PC-9 (cell line): ENCODE measurements at regions of chr2 and their contacts with region 1.

Region 1: DNA sequence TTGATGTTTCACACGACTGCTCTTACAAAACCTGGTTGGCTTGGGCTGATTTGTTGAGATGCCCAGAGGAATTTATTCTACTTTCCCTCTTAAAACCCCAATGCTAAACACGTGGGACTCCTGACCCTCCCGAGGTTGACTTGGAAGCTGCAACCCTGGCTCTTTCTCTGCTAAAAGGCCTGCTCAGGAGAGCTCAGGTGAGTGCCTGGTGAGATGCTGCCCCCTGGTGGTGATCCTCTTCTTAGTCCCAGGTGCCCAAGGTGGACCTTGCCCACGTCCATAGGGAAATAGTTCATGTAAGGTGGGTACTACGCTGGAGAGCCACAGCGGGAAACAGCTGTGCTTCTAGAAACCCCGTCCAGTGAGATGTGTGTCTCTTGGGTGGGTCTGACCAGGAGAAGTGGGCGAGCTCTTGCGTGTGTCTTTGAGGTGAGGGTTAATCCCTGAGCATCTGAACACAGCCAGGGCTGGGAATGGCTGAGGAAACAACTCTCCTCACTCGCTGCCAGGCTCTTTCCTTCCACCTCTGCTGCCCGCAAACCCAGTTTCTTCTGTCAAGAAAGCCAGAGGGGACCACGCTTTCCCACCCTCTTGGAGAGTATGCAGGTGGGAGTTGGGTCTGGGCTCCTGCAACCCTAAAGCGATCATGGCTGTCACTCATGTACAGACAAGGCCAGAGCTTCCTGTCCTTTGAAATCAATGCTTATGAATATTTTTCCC is 25.5 kb upstream of the PXDN start:
- DNase-seq: peak; percentile 52 to 70
- H3K4me3 ChIP-seq: no peak overlapping the region
- H3K27ac ChIP-seq: no peak overlapping the region
- H3K4me1 ChIP-seq: no peaks in the 10 kb centered on the region
- H3K27me3 ChIP-seq: peaks cover 25% of the 10 kb centered on the region; the same call in 1 of the 2 replicates
- CTCF ChIP-seq: peak; percentile 92

Region 2: DNA sequence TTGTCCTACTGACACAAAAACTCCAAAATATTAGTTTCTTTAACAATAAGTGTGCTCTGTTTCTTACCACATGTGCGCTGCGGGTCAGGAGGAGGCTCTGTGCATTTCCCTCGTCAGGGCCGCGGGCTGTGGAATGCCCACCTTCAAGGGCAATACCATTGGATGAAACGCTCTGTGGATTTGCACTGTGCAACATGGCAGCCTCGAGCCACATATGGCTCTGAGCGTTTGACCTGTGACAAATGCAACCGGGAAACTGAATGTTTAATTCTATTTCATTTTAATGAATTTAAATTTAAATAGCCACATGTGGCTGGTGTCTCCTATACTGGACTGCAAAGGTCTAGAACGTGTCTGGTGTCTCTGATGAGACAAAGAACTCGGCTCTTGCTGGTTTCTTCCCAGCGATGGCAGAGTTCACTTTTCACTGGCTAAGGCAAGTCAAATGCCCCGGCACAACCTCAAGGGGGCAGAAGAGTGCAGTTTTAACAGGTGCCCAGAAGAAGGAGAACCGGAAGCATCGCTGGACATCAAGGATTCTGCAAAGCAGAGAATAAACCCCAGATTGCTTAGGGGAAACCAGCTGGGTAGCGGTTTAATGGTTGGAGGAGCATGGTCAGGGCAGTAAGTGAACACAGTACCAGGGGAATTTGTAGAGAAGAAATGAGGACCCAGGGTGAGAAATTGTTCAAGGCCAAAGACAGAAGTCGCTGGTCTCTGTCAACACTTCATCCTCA is 1055.7 kb before region 1 on chr2:
- CTCF ChIA-PET with region 1: no interaction called
- POLR2A ChIA-PET with region 1: no interaction called
- intact Hi-C with region 1: loop called (anchors 5 kb)
- DNase-seq: peak; percentile 20 to 40
- H3K4me3 ChIP-seq: no peak overlapping the region
- H3K27ac ChIP-seq: no peak overlapping the region
- H3K4me1 ChIP-seq: no peaks in the 10 kb centered on the region
- H3K27me3 ChIP-seq: peaks cover 99% of the 10 kb centered on the region
- CTCF ChIP-seq: peak; percentile 63

Region 3: GRCh38 chr2:854460-854859 is 915.4 kb before region 1 on chr2:
- CTCF ChIA-PET with region 1: no interaction called
- POLR2A ChIA-PET with region 1: no interaction called
- intact Hi-C with region 1: loop called (anchors 5 kb)
- DNase-seq: peak in 1 of 2 experiments; percentile 16
- H3K4me3 ChIP-seq: no peak overlapping the region
- H3K27ac ChIP-seq: no peak overlapping the region
- H3K4me1 ChIP-seq: no peaks in the 10 kb centered on the region
- H3K27me3 ChIP-seq: peaks cover 79% of the 10 kb centered on the region
- CTCF ChIP-seq: peak; percentile 63